Natural killer cell (primary cell): ENCODE measurements at regions of chr5 and their contacts with region 1.

Region 1: GRCh38 chr5:57173185-57174127 is at the start of gene GPBP1:
- DNase-seq: peak; percentile 97 to 99
- ATAC-seq: peak; percentile 77 to 92 (median 82)
- H3K4me3 ChIP-seq: peak within 1 kb of the TSS; percentile 91
- H3K4me3 Mint-ChIP-seq: peak within 1 kb of the TSS; percentile 98
- H3K27ac ChIP-seq: peak within 1 kb of the TSS; percentile 98
- H3K27ac Mint-ChIP-seq: peak within 1 kb of the TSS; percentile 98 to 100
- H3K4me1 ChIP-seq: peaks cover 23% of the 10 kb centered on the region
- H3K4me1 Mint-ChIP-seq: peaks cover 45 to 48% of the 10 kb centered on the region in 2 donors
- H3K27me3 ChIP-seq: no peaks in the 10 kb centered on the region
- H3K27me3 Mint-ChIP-seq: no peaks in the 10 kb centered on the region
- CTCF ChIP-seq: no peak
- total RNA-seq, gene GPBP1: 104 to 130 (median 118) TPM

Region 2: GRCh38 chr5:55994574-55995333 is 1178.7 kb before region 1 on chr5 and contains the start of gene IL6ST:
- intact Hi-C with region 1: loop called (anchors 10 kb)
- DNase-seq: peak; percentile 95 to 98
- ATAC-seq: peak; percentile 95 to 100 (median 98)
- H3K4me3 ChIP-seq: peak within 1 kb of the TSS; percentile 94
- H3K4me3 Mint-ChIP-seq: peak within 1 kb of the TSS; percentile 99
- H3K27ac ChIP-seq: peak within 1 kb of the TSS; percentile 77
- H3K27ac Mint-ChIP-seq: peak within 1 kb of the TSS; percentile 92 to 96
- H3K4me1 ChIP-seq: peaks cover 5% of the 10 kb centered on the region
- H3K4me1 Mint-ChIP-seq: peaks cover 29 to 45% of the 10 kb centered on the region in 2 donors
- H3K27me3 ChIP-seq: no peaks in the 10 kb centered on the region
- H3K27me3 Mint-ChIP-seq: no peaks in the 10 kb centered on the region
- CTCF ChIP-seq: no peak
- total RNA-seq, gene IL6ST: 48.5 to 73.0 (median 53.8) TPM

Region 3: DNA sequence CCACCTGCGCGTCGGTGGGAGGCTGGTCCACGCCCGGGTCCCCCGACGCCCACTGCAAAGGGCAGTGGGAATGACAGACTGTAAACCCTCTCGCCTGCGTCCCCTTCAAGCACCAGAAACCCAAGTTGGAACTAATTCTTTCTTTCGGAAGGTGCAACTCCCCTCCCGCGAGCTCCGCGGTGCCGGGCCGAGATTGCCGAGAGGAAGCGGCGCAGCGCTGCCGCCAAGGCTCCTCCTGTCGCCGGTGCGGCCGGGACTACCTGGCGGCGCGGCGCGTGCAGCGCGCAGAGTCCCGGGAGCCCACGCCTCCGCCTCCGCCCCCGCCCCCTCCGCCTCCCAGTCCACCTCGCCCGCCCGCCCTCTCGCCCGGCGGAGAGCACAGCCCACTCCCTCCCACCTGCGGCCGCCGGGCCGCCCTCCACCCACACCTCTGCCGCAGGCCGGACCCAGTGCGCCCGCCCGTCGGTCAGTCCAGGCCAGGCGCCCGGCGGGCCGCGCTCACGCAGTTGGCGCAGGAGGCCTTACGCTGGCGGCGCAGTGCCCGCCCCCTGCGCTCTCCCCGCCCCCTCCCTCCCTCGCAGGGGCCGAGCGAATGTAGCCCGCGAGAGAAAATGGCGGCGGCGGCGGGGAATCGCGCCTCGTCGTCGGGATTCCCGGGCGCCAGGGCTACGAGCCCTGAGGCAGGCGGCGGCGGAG is 358.3 kb before region 1 on chr5 and contains the start of gene MAP3K1:
- intact Hi-C with region 1: loop called (anchors 2 kb)
- DNase-seq: peak; percentile 82 to 93
- ATAC-seq: peak; percentile 66 to 86 (median 71)
- H3K4me3 ChIP-seq: peak within 1 kb of the TSS; percentile 95
- H3K4me3 Mint-ChIP-seq: peak within 1 kb of the TSS; percentile 95
- H3K27ac ChIP-seq: peak within 1 kb of the TSS; percentile 92
- H3K27ac Mint-ChIP-seq: peak within 1 kb of the TSS; percentile 92 to 93
- H3K4me1 ChIP-seq: peaks cover 11% of the 10 kb centered on the region
- H3K4me1 Mint-ChIP-seq: peaks cover 34 to 35% of the 10 kb centered on the region in 2 donors
- H3K27me3 ChIP-seq: no peaks in the 10 kb centered on the region
- H3K27me3 Mint-ChIP-seq: no peaks in the 10 kb centered on the region
- CTCF ChIP-seq: no peak
- total RNA-seq, gene MAP3K1: 27.8 to 35.7 (median 35.5) TPM

Region 4: DNA sequence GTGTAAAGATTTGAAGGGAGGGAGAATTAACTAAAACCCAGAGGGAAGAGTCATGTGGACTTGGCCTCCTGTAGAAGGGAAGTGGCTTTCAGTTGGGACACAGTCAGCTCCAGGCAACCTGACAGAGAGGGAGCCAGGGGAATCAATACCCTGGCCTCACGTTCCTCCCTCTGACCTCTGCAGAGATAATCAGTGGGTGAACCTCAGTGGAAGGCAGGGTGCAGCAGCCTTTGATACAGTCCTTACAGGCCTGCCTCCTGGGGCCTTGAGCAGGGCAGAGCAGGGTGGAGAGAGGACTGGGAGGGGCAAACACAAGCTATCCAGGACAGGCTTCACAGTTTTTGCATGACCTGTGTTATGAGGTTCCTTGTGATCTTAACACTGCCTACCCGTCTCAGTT is 61.5 kb before region 1 on chr5:
- intact Hi-C with region 1: no loop called
- DNase-seq: no peak
- ATAC-seq: no peak
- H3K4me3 ChIP-seq: no peak overlapping the region
- H3K4me3 Mint-ChIP-seq: no peak overlapping the region
- H3K27ac ChIP-seq: no peak overlapping the region
- H3K27ac Mint-ChIP-seq: no peak overlapping the region
- H3K4me1 ChIP-seq: no peaks in the 10 kb centered on the region
- H3K4me1 Mint-ChIP-seq: no peaks in the 10 kb centered on the region
- H3K27me3 ChIP-seq: no peaks in the 10 kb centered on the region
- H3K27me3 Mint-ChIP-seq: peaks cover 0 to under 1% of the 10 kb centered on the region in 2 donors
- CTCF ChIP-seq: no peak

Region 5: DNA sequence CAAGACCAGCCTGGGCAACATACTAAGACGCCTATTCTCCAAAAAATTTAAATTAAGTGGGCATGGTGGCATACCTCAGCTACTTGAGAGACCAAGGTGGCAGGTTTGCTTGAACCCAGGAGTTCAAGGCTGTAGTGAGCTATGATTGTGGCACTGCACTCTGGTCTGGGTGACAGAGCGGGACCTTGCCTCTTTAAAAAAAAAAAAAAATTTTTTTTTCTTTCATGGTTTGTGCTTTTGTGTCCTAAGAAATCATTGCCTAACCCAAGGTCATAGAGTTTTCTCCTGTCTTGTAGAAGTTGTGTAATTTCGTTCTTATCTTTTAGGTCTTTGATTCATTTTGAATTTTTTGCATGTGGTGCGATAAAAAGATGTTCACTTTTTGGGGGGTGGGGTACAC is 12.7 kb after region 1 on chr5:
- intact Hi-C with region 1: loop called (anchors 1 kb)
- DNase-seq: no peak
- ATAC-seq: peak in 1 of 3 donors; percentile 24
- H3K4me3 ChIP-seq: no peak overlapping the region
- H3K4me3 Mint-ChIP-seq: peak overlapping the region; percentile 21
- H3K27ac ChIP-seq: no peak overlapping the region
- H3K27ac Mint-ChIP-seq: peak overlapping the region; percentile 57 to 61
- H3K4me1 ChIP-seq: peaks cover 74% of the 10 kb centered on the region
- H3K4me1 Mint-ChIP-seq: peaks cover 60 to 72% of the 10 kb centered on the region in 2 donors
- H3K27me3 ChIP-seq: no peaks in the 10 kb centered on the region
- H3K27me3 Mint-ChIP-seq: no peaks in the 10 kb centered on the region
- CTCF ChIP-seq: no peak

Region 6: DNA sequence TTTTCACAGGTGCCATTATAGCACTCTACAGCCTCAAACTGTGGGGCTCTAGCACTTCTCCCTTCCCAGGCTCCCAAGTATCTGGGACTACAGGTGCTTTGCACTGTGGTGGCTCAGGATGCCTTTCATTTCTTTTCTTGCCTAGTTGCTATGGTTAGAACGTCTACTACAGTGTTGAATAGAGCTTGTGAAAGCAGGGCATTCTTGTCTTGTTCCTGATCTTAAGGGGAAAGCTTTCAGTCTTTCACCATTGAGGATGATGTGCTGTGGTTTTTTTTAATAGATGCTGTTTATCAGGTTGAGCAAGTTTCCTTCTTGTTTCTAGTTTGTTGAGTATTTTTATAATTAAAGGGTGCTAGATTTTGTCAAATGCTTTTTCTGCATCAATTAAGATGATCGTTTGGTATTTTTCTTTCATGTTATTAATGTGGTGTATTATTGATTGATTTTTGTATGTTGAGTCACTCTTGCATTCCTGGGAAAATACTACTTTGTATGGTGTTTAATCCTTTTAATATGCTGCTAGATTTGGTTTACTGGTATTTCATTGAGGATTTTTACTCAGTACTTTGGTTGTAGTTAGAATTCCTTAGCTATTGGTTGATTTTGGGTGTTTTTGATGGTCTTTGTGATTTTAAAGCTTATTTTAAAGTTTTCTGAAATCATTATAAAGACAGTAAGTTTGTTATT is 36.0 kb after region 1 on chr5:
- intact Hi-C with region 1: loop called (anchors 5 kb)
- DNase-seq: no peak
- ATAC-seq: peak in 2 of 3 donors; percentile 27 to 57
- H3K4me3 ChIP-seq: no peak overlapping the region
- H3K4me3 Mint-ChIP-seq: peak overlapping the region; percentile 5
- H3K27ac ChIP-seq: no peak overlapping the region
- H3K27ac Mint-ChIP-seq: peak overlapping the region; percentile 32 to 81
- H3K4me1 ChIP-seq: peaks cover 22% of the 10 kb centered on the region
- H3K4me1 Mint-ChIP-seq: peaks cover 53 to 63% of the 10 kb centered on the region in 2 donors
- H3K27me3 ChIP-seq: no peaks in the 10 kb centered on the region
- H3K27me3 Mint-ChIP-seq: no peaks in the 10 kb centered on the region
- CTCF ChIP-seq: no peak

Region 7: DNA sequence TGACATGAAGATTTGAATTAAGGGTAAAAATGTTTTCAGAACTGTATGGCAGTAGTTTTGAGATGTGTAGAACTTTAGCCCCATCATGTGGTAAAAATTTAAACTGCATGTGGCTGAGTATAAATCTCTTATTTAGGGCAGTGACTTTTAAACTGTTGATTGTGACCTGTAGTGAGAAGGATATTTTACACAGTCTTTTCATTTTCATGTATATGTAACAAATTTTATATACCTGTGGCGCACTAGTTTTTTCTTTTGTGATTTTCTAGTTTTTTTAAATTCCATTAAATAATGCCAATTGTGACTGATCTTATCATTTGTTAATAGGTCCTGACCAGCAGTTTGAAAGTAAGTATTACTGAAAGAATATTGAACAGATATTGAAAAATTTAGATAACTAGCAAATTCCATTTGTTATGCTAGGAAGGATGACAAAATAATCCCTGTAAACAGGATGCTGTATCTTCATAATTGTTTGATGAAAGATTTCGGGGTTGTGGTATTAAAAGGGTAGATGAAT is 47.7 kb after region 1 on chr5:
- intact Hi-C with region 1: loop called (anchors 5 kb)
- DNase-seq: peak in 1 of 2 donors; percentile 87
- ATAC-seq: peak; percentile 78 to 90 (median 87)
- H3K4me3 ChIP-seq: no peak overlapping the region
- H3K4me3 Mint-ChIP-seq: peak overlapping the region; percentile 56
- H3K27ac ChIP-seq: no peak overlapping the region
- H3K27ac Mint-ChIP-seq: peak overlapping the region; percentile 81 to 89
- H3K4me1 ChIP-seq: no peaks in the 10 kb centered on the region
- H3K4me1 Mint-ChIP-seq: peaks cover 26 to 28% of the 10 kb centered on the region in 2 donors
- H3K27me3 ChIP-seq: no peaks in the 10 kb centered on the region
- H3K27me3 Mint-ChIP-seq: no peaks in the 10 kb centered on the region
- CTCF ChIP-seq: peak; percentile 93